ENCODE measurements at regions of chr7 and their contacts with region 1.

Region 1: GRCh38 chr7:76262683-76263402 is 39.6 kb upstream of the HSPB1 start:
- DNase-seq: peak; percentile 63 to 86 (median 74)
- H3K4me3 ChIP-seq: no peak overlapping the region
- H3K27ac ChIP-seq: no peak overlapping the region
- H3K4me1 ChIP-seq: peaks cover 9% of the 10 kb centered on the region in 2 donors
- H3K27me3 ChIP-seq: peaks cover 15% of the 10 kb centered on the region
- CTCF ChIP-seq: peak; percentile 58 to 81 (median 74)
- POLR2A ChIP-seq: no peak

Region 2: GRCh38 chr7:76179686-76180085 is 83.2 kb before region 1 on chr7:
- intact Hi-C with region 1: loop called (anchors 5 kb)
- DNase-seq: no peak
- H3K4me3 ChIP-seq: no peak overlapping the region
- H3K27ac ChIP-seq: no peak overlapping the region
- H3K4me1 ChIP-seq: peaks cover 0 to 3% of the 10 kb centered on the region in 2 donors
- H3K27me3 ChIP-seq: no peaks in the 10 kb centered on the region
- CTCF ChIP-seq: no peak
- POLR2A ChIP-seq: no peak

Measured in adrenal gland (tissue), 19 donors.